CD14-positive monocyte (primary cell): ENCODE measurements at regions of chr10 and their contacts with region 1.

Region 1: DNA sequence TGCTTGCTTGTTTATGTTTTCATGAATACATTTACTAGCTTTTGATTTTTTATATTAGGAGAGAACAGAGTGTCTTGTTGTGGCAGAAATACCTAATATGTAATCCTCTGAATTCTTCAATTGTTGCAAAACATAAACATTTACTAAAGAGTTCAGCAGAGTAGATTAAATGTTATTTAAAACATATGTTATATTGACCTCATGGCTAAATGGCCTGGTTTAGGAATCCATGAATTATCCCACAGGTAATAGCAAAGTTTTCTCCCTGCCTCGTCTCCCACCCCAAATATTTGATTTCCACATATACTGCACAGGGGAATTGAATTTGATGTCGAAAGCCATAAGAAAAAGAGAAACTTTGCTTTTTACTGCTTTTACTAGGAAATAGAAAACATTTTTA is 111.8 kb downstream of the ADK start:
- DNase-seq: no peak
- H3K4me3 ChIP-seq: no peak overlapping the region
- H3K4me3 Mint-ChIP-seq: no peak overlapping the region
- H3K27ac ChIP-seq: no peak overlapping the region
- H3K27ac Mint-ChIP-seq: no peak overlapping the region
- H3K4me1 ChIP-seq: no peaks in the 10 kb centered on the region
- H3K4me1 Mint-ChIP-seq: peaks cover 6% of the 10 kb centered on the region
- H3K27me3 ChIP-seq: no peaks in the 10 kb centered on the region
- H3K27me3 Mint-ChIP-seq: peaks cover 0 to 2% (median 0%) of the 10 kb centered on the region in 3 donors
- CTCF ChIP-seq: no peak

Region 2: GRCh38 chr10:74071157-74071556 is 191.7 kb before region 1 on chr10:
- intact Hi-C with region 1: no loop called
- DNase-seq: no peak
- H3K4me3 ChIP-seq: no peak overlapping the region
- H3K4me3 Mint-ChIP-seq: no peak overlapping the region
- H3K27ac ChIP-seq: no peak overlapping the region
- H3K27ac Mint-ChIP-seq: peak overlapping the region in 1 of 7 donors; percentile 36
- H3K4me1 ChIP-seq: peaks cover 4 to 9% of the 10 kb centered on the region in 2 donors
- H3K4me1 Mint-ChIP-seq: peaks cover 13% of the 10 kb centered on the region
- H3K27me3 ChIP-seq: no peaks in the 10 kb centered on the region
- H3K27me3 Mint-ChIP-seq: no peaks in the 10 kb centered on the region
- CTCF ChIP-seq: no peak

Region 3: GRCh38 chr10:74394416-74394969 is 131.6 kb after region 1 on chr10:
- intact Hi-C with region 1: no loop called
- DNase-seq: no peak
- H3K4me3 ChIP-seq: no peak overlapping the region
- H3K4me3 Mint-ChIP-seq: no peak overlapping the region
- H3K27ac ChIP-seq: no peak overlapping the region
- H3K27ac Mint-ChIP-seq: peak overlapping the region in 1 of 7 donors; percentile 64
- H3K4me1 ChIP-seq: peaks cover 8 to 9% of the 10 kb centered on the region in 2 donors
- H3K4me1 Mint-ChIP-seq: peaks cover 13% of the 10 kb centered on the region
- H3K27me3 ChIP-seq: no peaks in the 10 kb centered on the region
- H3K27me3 Mint-ChIP-seq: peaks cover 0 to 2% (median 0%) of the 10 kb centered on the region in 3 donors
- CTCF ChIP-seq: no peak

Region 4: GRCh38 chr10:75021379-75022249 is 758.8 kb after region 1 on chr10:
- intact Hi-C with region 1: loop called (anchors 5 to 10 kb)
- DNase-seq: no peak
- H3K4me3 ChIP-seq: no peak overlapping the region
- H3K4me3 Mint-ChIP-seq: no peak overlapping the region
- H3K27ac ChIP-seq: no peak overlapping the region
- H3K27ac Mint-ChIP-seq: peak overlapping the region in 3 of 7 donors; percentile 12 to 69 (median 30)
- H3K4me1 ChIP-seq: no peaks in the 10 kb centered on the region
- H3K4me1 Mint-ChIP-seq: peaks cover 3% of the 10 kb centered on the region
- H3K27me3 ChIP-seq: no peaks in the 10 kb centered on the region
- H3K27me3 Mint-ChIP-seq: peaks cover 0 to 1% (median 0%) of the 10 kb centered on the region in 3 donors
- CTCF ChIP-seq: no peak

Region 5: GRCh38 chr10:75029857-75030256 is 767.0 kb after region 1 on chr10:
- intact Hi-C with region 1: loop called in 1 of 2 experiments (anchors 10 kb)
- DNase-seq: no peak
- H3K4me3 ChIP-seq: no peak overlapping the region
- H3K4me3 Mint-ChIP-seq: no peak overlapping the region
- H3K27ac ChIP-seq: no peak overlapping the region
- H3K27ac Mint-ChIP-seq: no peak overlapping the region
- H3K4me1 ChIP-seq: no peaks in the 10 kb centered on the region
- H3K4me1 Mint-ChIP-seq: peaks cover 5% of the 10 kb centered on the region
- H3K27me3 ChIP-seq: no peaks in the 10 kb centered on the region
- H3K27me3 Mint-ChIP-seq: peaks cover 0 to 4% (median 0%) of the 10 kb centered on the region in 3 donors
- CTCF ChIP-seq: no peak

Region 6: DNA sequence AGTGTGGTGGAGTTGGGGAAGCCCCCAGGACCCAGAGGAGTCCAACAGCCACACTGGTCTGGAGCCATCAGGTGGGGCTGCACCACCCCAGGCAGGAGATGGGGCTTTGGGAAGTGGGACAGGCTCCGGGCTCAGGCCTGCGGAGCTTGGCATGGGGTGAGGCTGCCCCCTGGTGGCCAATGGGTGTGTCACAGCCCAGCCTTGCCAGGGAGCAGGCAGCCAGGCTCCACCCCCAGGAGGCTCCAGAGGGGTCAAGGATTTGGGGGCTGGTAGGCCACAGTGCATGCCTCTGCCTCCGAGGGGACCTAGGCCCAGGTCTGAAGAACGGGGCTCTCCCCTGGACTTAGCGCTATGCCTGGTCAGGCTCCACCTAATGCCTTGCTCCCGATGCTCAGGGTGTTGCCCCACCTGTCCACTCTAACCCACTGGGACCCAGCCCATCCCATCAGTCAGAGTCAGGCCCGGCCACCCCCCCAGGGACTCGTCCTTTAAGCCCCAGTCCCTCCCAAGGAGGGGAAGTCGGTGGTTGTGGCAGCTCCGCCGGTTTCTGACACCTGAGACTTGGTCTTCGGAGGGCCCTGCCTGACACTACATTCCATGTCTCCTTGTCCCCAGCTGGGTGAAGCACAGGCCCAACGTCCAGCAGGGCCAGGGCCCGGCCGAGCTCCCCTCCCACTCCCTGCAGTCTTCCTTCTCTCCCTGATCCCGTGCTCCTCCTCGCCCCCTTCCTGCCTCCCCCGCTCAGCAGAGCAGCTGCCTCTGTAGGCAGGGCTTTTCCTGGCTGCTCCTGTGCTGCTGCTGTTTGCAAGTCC is 837.3 kb after region 1 on chr10:
- intact Hi-C with region 1: loop called (anchors 5 kb)
- DNase-seq: peak; percentile 65 to 75 (median 70)
- H3K4me3 ChIP-seq: no peak overlapping the region
- H3K4me3 Mint-ChIP-seq: peak overlapping the region in 1 of 2 donors; percentile 54
- H3K27ac ChIP-seq: no peak overlapping the region
- H3K27ac Mint-ChIP-seq: peak overlapping the region in 1 of 7 donors; percentile 57
- H3K4me1 ChIP-seq: peaks cover 12 to 14% of the 10 kb centered on the region in 2 donors
- H3K4me1 Mint-ChIP-seq: peaks cover 17% of the 10 kb centered on the region
- H3K27me3 ChIP-seq: no peaks in the 10 kb centered on the region
- H3K27me3 Mint-ChIP-seq: peaks cover 0 to 8% (median 1%) of the 10 kb centered on the region in 3 donors
- CTCF ChIP-seq: peak; percentile 98